ENCODE measurements at regions of chr16 and their contacts with region 1.

Region 1: GRCh38 chr16:79601931-79602627 is 1.5 kb upstream of the MAF start:
- DNase-seq: peak; percentile 90

Region 2: GRCh38 chr16:78503602-78504001 is 1098.5 kb before region 1 on chr16:
- intact Hi-C with region 1: loop called in 1 of 2 experiments (anchors 10 kb)
- DNase-seq: no peak

Region 3: GRCh38 chr16:78925083-78925767 is 676.9 kb before region 1 on chr16:
- intact Hi-C with region 1: loop called in 1 of 2 experiments (anchors 10 kb)
- DNase-seq: no peak

Region 4: GRCh38 chr16:79677799-79678577 is 75.9 kb after region 1 on chr16:
- intact Hi-C with region 1: no loop called
- DNase-seq: no peak

Region 5: GRCh38 chr16:79876332-79876730 is 274.3 kb after region 1 on chr16:
- intact Hi-C with region 1: no loop called
- DNase-seq: no peak

Region 6: DNA sequence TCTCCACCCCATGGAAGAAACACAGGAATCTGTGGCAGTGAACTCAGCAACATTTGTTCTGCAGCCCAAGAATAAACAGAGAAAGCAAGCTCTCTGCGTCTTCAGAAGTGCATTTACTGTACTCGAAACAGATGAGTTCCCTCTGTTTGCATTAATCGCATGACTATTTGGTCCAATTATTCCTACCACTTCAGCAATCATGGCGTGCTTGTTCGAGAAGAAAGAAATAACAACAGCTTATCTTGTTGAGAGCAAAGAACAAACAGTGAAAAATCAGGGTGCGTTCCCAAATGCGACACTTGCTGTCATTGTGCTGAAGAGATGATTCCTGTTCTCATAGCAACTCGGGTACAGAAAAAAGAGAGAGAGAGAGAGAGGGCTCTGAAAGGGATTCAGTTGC is 443.8 kb after region 1 on chr16:
- intact Hi-C with region 1: no loop called
- DNase-seq: no peak

Region 7: GRCh38 chr16:80231888-80232287 is 629.8 kb after region 1 on chr16:
- intact Hi-C with region 1: no loop called
- DNase-seq: no peak